ENCODE measurements at regions of chr16 and their contacts with region 1.

Region 1: DNA sequence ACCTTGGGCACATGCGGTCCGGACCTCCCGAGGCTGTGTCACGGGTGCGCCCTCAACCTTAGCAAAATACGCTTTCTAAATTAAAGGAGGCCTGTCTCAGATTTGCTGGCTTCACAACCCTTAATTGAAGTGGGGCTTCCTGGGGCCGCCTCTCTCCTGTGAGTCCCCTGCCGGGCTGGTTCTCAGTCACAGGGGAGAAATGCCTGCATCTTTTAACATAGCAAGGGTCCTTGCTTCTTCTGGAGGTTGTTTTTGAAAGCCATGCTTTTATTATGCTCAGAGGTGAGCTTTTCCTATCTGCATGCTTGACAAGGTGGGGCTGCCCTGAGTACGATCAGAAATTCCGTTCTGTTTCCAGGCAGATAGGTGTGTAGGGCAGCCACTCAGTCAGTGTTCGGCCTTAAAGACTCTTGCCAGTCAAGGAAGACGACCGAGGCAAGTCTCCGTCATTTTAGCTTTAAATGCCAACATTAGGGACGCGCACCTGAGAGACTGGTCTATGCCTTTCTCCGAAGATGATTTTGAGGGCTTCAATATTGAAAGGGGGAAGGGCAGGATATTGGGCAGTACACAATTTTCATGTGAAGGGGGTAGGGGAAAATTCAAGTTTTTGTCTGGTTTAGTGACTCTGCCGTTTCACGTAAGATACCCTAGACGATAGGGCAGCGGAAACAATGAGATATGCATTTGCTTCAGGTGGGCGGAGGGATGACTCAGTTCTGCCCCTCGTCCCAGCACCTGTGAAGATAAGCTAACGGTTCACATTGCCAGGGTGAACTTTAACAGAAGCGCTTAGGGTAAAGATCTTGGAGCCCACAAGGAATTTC is 5.5 kb upstream of the SLC7A5 start:
- DNase-seq: no peak

Region 2: GRCh38 chr16:87778830-87779579 is 95.8 kb before region 1 on chr16:
- intact Hi-C with region 1: loop called (anchors 1 kb)
- DNase-seq: peak; percentile 96

Region 3: DNA sequence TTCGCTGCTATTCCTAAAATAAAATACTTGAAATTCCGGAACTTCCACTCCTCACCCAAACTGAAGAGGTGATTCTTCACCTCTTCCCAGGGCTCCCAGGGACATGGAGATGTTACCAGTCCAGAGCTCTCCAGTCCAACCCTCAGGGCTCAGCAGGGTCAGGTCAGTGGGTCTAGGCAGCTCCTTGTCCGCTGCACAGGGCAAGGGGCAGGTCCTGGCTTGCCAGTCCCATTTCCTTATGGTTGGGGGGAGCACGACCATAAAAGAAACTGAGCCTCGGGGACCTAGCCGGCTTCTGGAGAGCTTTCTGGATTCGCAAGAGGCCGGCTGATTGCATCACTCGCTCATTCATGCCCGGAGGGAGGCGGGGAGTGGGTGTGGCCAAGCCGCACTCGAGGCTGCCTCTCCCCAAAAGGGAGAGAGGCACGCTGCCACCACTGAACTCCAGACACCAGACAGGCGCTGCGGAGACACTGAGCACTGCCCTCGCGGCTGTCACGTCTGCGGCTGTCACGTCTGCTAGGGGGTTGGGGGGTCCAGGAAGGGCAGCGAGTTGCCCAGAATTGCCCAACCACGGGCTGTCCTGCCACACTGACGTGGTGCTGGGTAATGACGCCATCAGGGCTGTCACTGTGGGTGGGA is 21.3 kb before region 1 on chr16:
- intact Hi-C with region 1: loop called (anchors 1 kb)
- DNase-seq: peak; percentile 98

Measured in cardiac septum (tissue), 1 donor.